Activated CD4-positive, alpha-beta memory T cell treated with anti-CD3 and anti-CD28 coated beads for 36 hours (primary cell): ENCODE measurements at regions of chr11 and their contacts with region 1.

Region 1: GRCh38 chr11:103682318-103683184 is 353.9 kb upstream of the DDI1 start:
- DNase-seq: peak; percentile 54
- H3K4me3 Mint-ChIP-seq: no peak overlapping the region
- H3K27ac Mint-ChIP-seq: no peak overlapping the region
- H3K4me1 Mint-ChIP-seq: peaks cover 3% of the 10 kb centered on the region
- H3K27me3 Mint-ChIP-seq: no peaks in the 10 kb centered on the region

Region 2: GRCh38 chr11:103699216-103699615 is 16.7 kb after region 1 on chr11:
- CTCF ChIA-PET with region 1: interaction called, 17 read pairs
- POLR2A ChIA-PET with region 1: no interaction called
- intact Hi-C with region 1: no loop called
- DNase-seq: no peak
- H3K4me3 Mint-ChIP-seq: no peak overlapping the region
- H3K27ac Mint-ChIP-seq: no peak overlapping the region
- H3K4me1 Mint-ChIP-seq: no peaks in the 10 kb centered on the region
- H3K27me3 Mint-ChIP-seq: no peaks in the 10 kb centered on the region

Region 3: GRCh38 chr11:104151404-104152204 is 469.1 kb after region 1 on chr11:
- CTCF ChIA-PET with region 1: interaction called, 4 read pairs
- POLR2A ChIA-PET with region 1: no interaction called
- intact Hi-C with region 1: loop called (anchors 5 kb)
- DNase-seq: no peak
- H3K4me3 Mint-ChIP-seq: no peak overlapping the region
- H3K27ac Mint-ChIP-seq: no peak overlapping the region
- H3K4me1 Mint-ChIP-seq: no peaks in the 10 kb centered on the region
- H3K27me3 Mint-ChIP-seq: no peaks in the 10 kb centered on the region

Region 4: DNA sequence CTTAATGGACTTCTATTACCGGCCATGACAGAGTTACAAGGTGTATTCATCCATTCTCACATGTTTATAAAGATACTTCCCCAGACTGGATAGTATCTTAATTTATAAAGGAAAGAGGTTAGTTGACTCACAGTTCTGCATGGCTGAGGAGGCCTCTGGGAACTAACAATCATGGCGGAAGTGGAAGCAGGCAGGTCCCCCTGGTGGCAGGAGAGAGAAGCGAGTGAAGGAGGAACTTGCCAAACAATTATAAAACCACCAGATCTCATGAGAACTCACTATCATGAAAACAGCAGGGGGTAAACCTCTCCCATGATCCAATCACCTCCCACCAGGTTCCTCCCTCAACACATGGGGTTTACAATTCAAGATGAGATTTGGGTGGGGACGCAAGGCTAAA is 651.4 kb after region 1 on chr11:
- CTCF ChIA-PET with region 1: no interaction called
- POLR2A ChIA-PET with region 1: no interaction called
- intact Hi-C with region 1: loop called (anchors 5 kb)
- DNase-seq: peak; percentile 12
- H3K4me3 Mint-ChIP-seq: no peak overlapping the region
- H3K27ac Mint-ChIP-seq: no peak overlapping the region
- H3K4me1 Mint-ChIP-seq: no peaks in the 10 kb centered on the region
- H3K27me3 Mint-ChIP-seq: no peaks in the 10 kb centered on the region

Region 5: GRCh38 chr11:105000797-105001196 is 1318.2 kb after region 1 on chr11:
- CTCF ChIA-PET with region 1: no interaction called
- POLR2A ChIA-PET with region 1: no interaction called
- intact Hi-C with region 1: loop called (anchors 5 kb)
- DNase-seq: peak; percentile 74
- H3K4me3 Mint-ChIP-seq: no peak overlapping the region
- H3K27ac Mint-ChIP-seq: no peak overlapping the region
- H3K4me1 Mint-ChIP-seq: peaks cover 5% of the 10 kb centered on the region
- H3K27me3 Mint-ChIP-seq: no peaks in the 10 kb centered on the region